Posterior vena cava (tissue), 2 donors: ENCODE measurements at regions of chr16 and their contacts with region 1.

Region 1: GRCh38 chr16:73878611-73879010 is 418.0 kb upstream of the PSMD7 start:
- DNase-seq: no peak

Region 2: DNA sequence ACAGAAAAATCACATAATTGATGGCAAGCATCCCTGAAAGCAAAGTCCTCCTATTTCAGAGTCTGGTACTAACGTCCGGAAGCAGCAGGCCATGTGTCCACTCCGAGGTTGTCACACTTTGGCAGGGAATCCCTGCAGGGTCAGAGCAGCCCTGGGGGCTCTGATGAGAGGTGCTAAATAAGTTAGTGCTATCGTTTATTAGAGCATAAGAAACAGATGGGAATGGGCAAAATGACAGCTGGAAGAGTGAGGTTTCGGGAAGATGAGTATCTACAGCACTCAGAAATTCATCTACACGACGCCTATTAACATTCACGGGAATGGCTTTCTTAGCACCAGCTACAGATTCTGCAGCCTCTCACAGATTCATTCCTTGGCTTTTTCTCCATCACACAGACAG is 47.4 kb before region 1 on chr16:
- intact Hi-C with region 1: no loop called
- DNase-seq: no peak

Region 3: GRCh38 chr16:74726716-74727115 is 848.1 kb after region 1 on chr16:
- intact Hi-C with region 1: loop called in 1 of 2 experiments (anchors 10 kb)
- DNase-seq: no peak